ENCODE measurements at regions of chr10 and their contacts with region 1.

Region 1: DNA sequence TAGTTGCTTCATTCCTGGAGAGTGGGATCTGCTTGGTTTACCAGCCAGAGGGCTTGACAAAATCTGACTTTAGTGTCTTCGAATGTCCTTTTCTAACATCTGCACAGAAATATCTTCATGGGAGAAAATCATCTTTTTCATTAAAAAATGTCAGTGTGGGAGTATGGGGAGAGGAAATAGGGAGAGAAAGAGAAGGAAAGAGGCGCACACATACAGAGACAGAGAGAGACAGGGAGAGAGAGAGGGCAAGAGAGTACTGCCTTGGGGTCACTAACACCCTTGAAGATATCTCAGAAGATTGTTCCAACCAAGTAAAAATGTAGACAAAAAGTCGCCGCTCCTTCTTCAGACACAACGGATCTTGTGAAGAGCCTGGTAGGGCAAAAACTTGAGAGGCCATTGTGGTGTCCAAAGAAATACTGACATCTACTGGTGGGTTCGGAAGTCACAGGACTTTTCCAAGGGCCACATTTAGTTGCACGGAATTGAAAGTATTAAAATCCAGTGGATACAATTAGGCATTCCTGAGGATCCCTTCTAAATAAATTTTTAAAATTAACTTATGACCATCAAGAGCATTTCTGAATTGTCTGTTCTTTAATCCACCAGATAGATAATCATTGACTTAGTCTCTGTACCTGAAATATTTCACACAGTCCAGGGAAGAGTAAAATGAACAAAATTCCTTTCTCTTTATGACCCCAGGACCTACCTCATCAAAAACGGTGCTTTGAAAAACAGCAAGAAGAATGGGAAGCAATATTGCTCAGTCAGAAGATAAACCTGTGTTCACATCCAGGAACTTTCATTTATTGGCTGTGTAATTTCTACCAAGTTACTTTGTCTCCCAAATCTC is 29.7 kb downstream of the VIM start:
- DNase-seq: peak; percentile 66
- ATAC-seq: peak; percentile 88
- H3K4me3 Mint-ChIP-seq: peak overlapping the region; percentile 12
- H3K27ac Mint-ChIP-seq: no peak overlapping the region
- H3K4me1 Mint-ChIP-seq: peaks cover 14% of the 10 kb centered on the region
- H3K27me3 Mint-ChIP-seq: peaks cover 3% of the 10 kb centered on the region

Region 2: GRCh38 chr10:16828114-16828568 is 429.6 kb before region 1 on chr10:
- CTCF ChIA-PET with region 1: interaction called, 10 read pairs
- DNase-seq: peak; percentile 69
- ATAC-seq: peak; percentile 87
- H3K4me3 Mint-ChIP-seq: no peak overlapping the region
- H3K27ac Mint-ChIP-seq: no peak overlapping the region
- H3K4me1 Mint-ChIP-seq: peaks cover 6% of the 10 kb centered on the region
- H3K27me3 Mint-ChIP-seq: no peaks in the 10 kb centered on the region

Region 3: GRCh38 chr10:16843252-16843870 is 414.3 kb before region 1 on chr10:
- CTCF ChIA-PET with region 1: interaction called, 12 read pairs
- DNase-seq: no peak
- ATAC-seq: peak; percentile 61
- H3K4me3 Mint-ChIP-seq: no peak overlapping the region
- H3K27ac Mint-ChIP-seq: no peak overlapping the region
- H3K4me1 Mint-ChIP-seq: peaks cover 4% of the 10 kb centered on the region
- H3K27me3 Mint-ChIP-seq: peaks cover 2% of the 10 kb centered on the region

Region 4: GRCh38 chr10:17409170-17409733 is 151.6 kb after region 1 on chr10:
- CTCF ChIA-PET with region 1: no interaction called
- DNase-seq: no peak
- ATAC-seq: no peak
- H3K4me3 Mint-ChIP-seq: no peak overlapping the region
- H3K27ac Mint-ChIP-seq: no peak overlapping the region
- H3K4me1 Mint-ChIP-seq: peaks cover 1% of the 10 kb centered on the region
- H3K27me3 Mint-ChIP-seq: peaks cover 4% of the 10 kb centered on the region